ENCODE measurements at regions of chr2 and their contacts with region 1.

Region 1: DNA sequence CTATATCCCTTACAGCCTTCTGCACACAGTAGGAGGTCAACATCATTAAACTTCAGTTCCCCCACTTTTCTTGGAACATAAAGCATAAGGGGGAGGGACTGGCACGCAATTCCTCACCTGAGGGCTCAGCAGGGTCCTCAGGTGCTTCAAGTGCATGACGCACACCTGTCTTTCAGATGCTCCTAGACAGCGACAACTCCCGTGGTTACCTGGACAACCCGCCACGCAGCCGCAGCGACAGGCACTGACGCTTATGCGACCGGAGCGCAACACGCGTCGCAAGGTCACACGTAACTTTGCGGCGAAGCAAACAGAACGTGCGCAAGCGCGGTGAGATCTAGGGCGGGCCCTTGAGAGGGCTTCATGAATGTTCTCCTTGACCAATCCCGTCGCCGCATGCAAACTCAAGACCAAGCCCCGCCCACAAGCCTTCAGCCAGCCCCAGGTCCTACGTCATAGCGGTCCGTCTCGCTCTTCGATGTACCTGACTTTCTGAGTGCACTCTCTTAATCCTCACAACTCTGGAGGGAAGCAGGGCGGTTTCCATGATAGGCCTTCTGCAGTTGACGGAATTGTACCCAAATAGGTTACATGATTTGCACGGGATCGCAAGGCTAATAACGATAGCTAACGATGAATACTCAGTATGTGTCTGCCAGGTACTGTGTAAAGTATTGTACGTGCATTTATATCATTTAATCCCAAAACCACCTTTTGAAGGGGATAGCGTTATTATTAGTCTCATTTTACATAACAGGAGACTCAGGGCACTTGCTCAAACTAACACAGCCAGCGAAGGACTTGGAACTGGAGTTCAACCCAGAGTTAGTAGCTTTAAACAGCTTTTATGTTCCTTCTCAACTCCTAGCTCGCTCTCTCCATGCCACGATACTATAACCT is at the start of gene IFT172:
- DNase-seq: peak; percentile 100
- ATAC-seq: peak; percentile 97
- H3K4me3 ChIP-seq: peak within 1 kb of the TSS; percentile 57 to 79 (median 59)
- H3K4me3 Mint-ChIP-seq: peak within 1 kb of the TSS; percentile 92
- H3K27ac ChIP-seq: peak within 1 kb of the TSS; percentile 60 to 84
- H3K27ac Mint-ChIP-seq: peak within 1 kb of the TSS; percentile 93
- H3K4me1 ChIP-seq: peaks cover 19 to 21% of the 10 kb centered on the region in 2 donors
- H3K4me1 Mint-ChIP-seq: peaks cover 27% of the 10 kb centered on the region
- H3K27me3 ChIP-seq: peaks cover 0 to 20% (median 10%) of the 10 kb centered on the region in 4 experiments
- H3K27me3 Mint-ChIP-seq: peaks cover 17% of the 10 kb centered on the region
- CTCF ChIP-seq: no peak
- total RNA-seq, gene IFT172: 33.3 and 41.0 TPM in 2 replicates

Region 2: DNA sequence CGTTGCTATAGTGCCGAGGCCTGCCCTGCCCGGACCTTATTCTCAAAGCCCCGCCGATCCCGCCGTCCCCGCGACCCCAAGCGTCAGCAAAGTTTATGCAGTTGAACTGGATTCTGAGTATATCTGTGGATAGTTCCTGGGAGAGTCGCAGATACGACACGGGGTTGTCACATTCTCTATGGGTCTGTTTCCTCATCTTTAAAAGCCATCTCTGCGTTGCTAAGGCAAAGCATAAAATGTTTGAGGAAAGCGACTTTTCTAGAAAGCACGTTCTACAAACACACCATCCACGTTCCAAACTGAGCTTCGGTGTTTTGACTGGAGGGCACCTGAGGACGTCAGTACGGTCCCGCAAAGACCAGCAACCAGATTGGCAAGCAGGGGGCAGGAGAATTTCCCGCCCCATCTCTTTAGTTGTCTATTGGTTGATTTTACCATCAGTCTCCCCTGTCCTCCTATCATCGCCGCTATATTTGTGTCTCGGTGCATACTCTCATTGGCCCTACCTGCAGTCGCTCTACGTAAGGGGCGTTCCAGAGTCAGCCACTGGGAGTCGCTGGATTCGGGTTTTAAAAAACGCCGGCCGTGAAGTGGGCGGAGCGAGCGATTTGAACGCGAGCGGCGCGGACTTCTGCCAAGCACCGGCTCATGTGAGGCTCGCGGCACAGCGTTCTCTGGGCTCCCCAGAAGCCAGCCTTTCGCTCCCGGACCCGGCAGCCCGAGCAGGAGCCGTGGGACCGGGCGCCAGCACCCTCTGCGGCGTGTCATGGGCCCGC is 704.1 kb before region 1 on chr2 and contains the start of gene CENPA:
- CTCF ChIA-PET with region 1: no interaction called
- POLR2A ChIA-PET with region 1: no interaction called
- intact Hi-C with region 1: loop called (anchors 2 kb)
- DNase-seq: peak; percentile 98
- ATAC-seq: peak; percentile 99
- H3K4me3 ChIP-seq: peak within 1 kb of the TSS; percentile 51 to 81 (median 71)
- H3K4me3 Mint-ChIP-seq: peak within 1 kb of the TSS; percentile 93
- H3K27ac ChIP-seq: peak within 1 kb of the TSS; percentile 27 to 41
- H3K27ac Mint-ChIP-seq: peak within 1 kb of the TSS; percentile 83
- H3K4me1 ChIP-seq: peaks cover 8 to 14% of the 10 kb centered on the region in 2 donors
- H3K4me1 Mint-ChIP-seq: peaks cover 13% of the 10 kb centered on the region
- H3K27me3 ChIP-seq: no peaks in the 10 kb centered on the region
- H3K27me3 Mint-ChIP-seq: peaks cover 3% of the 10 kb centered on the region
- CTCF ChIP-seq: peak; percentile 7
- total RNA-seq, gene CENPA: not detected in 2 replicates

Region 3: GRCh38 chr2:27409321-27410073 is 80.3 kb before region 1 on chr2 and contains the start of gene PPM1G:
- CTCF ChIA-PET with region 1: no interaction called
- POLR2A ChIA-PET with region 1: no interaction called
- intact Hi-C with region 1: loop called (anchors 1 kb)
- DNase-seq: peak; percentile 96
- ATAC-seq: peak; percentile 97
- H3K4me3 ChIP-seq: peak within 1 kb of the TSS; percentile 28 to 96 (median 95)
- H3K4me3 Mint-ChIP-seq: peak within 1 kb of the TSS; percentile 87
- H3K27ac ChIP-seq: peak within 1 kb of the TSS; percentile 76 to 77
- H3K27ac Mint-ChIP-seq: peak within 1 kb of the TSS; percentile 90
- H3K4me1 ChIP-seq: peaks cover 15 to 20% of the 10 kb centered on the region in 2 donors
- H3K4me1 Mint-ChIP-seq: peaks cover 26% of the 10 kb centered on the region
- H3K27me3 ChIP-seq: no peaks in the 10 kb centered on the region
- H3K27me3 Mint-ChIP-seq: peaks cover 13% of the 10 kb centered on the region
- CTCF ChIP-seq: no peak
- total RNA-seq, gene PPM1G: 45.5 and 48.9 TPM in 2 replicates

Region 4: DNA sequence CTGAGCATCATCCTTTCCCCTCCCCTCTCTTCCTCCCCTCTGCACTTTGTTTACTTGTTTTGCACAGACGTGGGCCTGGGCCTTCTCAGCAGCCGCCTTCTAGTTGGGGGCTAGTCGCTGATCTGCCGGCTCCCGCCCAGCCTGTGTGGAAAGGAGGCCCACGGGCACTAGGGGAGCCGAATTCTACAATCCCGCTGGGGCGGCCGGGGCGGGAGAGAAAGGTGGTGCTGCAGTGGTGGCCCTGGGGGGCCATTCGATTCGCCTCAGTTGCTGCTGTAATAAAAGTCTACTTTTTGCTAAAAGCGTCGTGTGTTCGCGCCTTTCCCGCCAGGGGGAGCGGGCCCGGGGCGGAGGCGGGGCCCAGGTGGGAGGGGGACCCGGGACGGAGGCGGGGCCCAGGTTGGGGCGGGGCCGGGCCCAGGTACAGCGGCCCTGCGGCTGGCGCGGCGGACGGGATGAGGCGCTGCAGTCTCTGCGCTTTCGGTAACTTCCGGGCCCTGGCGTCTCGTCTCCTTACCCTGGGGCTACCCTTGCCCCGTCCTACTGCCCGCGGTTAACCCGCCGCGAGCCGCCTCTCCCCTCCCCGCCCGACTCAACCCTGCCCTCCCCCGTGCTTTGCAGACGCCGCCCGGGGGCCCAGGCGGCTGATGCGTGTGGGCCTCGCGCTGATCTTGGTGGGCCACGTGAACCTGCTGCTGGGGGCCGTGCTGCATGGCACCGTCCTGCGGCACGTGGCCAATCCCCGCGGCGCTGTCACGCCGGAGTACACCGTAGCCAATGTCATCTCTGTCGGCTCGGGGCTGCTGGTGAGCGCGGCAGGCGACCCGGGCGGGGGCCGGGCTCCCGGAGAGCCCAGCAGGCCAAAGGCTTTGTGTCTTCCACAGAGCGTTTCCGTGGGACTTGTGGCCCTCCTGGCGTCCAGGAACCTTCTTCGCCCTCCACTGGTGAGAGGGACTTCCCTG is 47.5 kb before region 1 on chr2 and contains the start of gene KRTCAP3:
- CTCF ChIA-PET with region 1: no interaction called
- POLR2A ChIA-PET with region 1: no interaction called
- intact Hi-C with region 1: loop called (anchors 5 kb)
- DNase-seq: peak; percentile 70
- ATAC-seq: peak; percentile 98
- H3K4me3 ChIP-seq: peak within 1 kb of the TSS in 3 of 5 experiments; percentile 19 to 37 (median 27)
- H3K4me3 Mint-ChIP-seq: peak within 1 kb of the TSS; percentile 72
- H3K27ac ChIP-seq: no peak within 1 kb of the TSS
- H3K27ac Mint-ChIP-seq: peak within 1 kb of the TSS; percentile 72
- H3K4me1 ChIP-seq: peaks cover 3 to 6% of the 10 kb centered on the region in 2 donors
- H3K4me1 Mint-ChIP-seq: peaks cover 12% of the 10 kb centered on the region
- H3K27me3 ChIP-seq: no peaks in the 10 kb centered on the region
- H3K27me3 Mint-ChIP-seq: no peaks in the 10 kb centered on the region
- CTCF ChIP-seq: peak; percentile 58
- total RNA-seq, gene KRTCAP3: 15.0 and 16.5 TPM in 2 replicates

Region 5: GRCh38 chr2:27552941-27553340 is 63.2 kb after region 1 on chr2:
- CTCF ChIA-PET with region 1: no interaction called
- POLR2A ChIA-PET with region 1: no interaction called
- intact Hi-C with region 1: no loop called
- DNase-seq: no peak
- ATAC-seq: no peak
- H3K4me3 ChIP-seq: no peak overlapping the region
- H3K4me3 Mint-ChIP-seq: no peak overlapping the region
- H3K27ac ChIP-seq: no peak overlapping the region
- H3K27ac Mint-ChIP-seq: no peak overlapping the region
- H3K4me1 ChIP-seq: no peaks in the 10 kb centered on the region
- H3K4me1 Mint-ChIP-seq: no peaks in the 10 kb centered on the region
- H3K27me3 ChIP-seq: peaks cover 0 to 3% (median 2%) of the 10 kb centered on the region in 4 experiments
- H3K27me3 Mint-ChIP-seq: peaks cover 18% of the 10 kb centered on the region
- CTCF ChIP-seq: no peak

Region 6: DNA sequence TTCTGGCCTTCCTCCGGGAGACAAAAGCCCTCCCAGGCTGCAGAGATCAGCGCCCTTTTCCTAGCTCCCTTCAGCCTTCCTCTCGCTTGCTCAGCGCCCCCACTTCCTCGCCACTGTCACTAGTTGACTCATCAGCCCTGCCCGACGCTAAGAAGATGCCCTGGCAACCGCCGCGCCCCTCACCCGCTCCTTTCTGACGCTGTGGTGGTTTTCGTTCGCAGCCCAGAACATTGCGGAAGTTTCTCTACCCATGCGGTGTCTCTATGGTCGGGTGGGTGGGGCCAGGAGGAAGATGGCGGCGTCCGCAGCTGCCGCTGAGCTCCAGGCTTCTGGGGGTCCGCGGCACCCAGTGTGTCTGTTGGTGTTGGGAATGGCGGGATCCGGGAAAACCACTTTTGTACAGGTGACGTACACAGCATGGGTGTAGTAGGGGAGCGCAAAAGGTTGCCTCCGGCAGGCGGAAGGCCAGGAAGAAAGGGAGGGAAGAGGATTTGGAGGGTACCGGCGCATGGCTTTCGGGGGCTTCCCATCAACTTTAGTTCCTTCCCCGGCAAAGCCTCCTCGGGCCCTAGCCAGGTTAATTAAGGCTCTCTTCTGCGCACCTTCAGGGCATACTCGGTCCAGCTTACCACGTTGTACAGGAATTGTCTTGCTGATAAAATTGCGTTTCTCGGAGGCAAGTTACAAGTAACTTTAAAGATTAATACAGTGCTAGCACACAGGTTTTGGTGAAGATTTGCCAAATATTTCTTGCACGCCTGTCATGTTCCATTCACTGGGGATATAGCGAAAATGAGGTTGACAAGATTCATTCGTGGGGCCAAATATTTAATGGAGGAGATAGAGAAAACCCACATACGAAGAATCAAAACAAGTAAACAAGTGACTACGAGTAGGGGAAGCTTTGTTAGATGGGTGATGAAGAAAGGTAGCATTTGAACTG is 139.3 kb after region 1 on chr2 and contains the starts of genes CCDC121 and GPN1:
- CTCF ChIA-PET with region 1: no interaction called
- POLR2A ChIA-PET with region 1: no interaction called
- intact Hi-C with region 1: loop called (anchors 1 kb)
- DNase-seq: peak; percentile 94
- ATAC-seq: peak; percentile 100
- H3K4me3 ChIP-seq: peak within 1 kb of the TSS; percentile 83 to 98 (median 91)
- H3K4me3 Mint-ChIP-seq: no peak within 1 kb of the TSS
- H3K27ac ChIP-seq: peak within 1 kb of the TSS; percentile 70 to 83
- H3K27ac Mint-ChIP-seq: peak within 1 kb of the TSS; percentile 51
- H3K4me1 ChIP-seq: peaks cover 10 to 17% of the 10 kb centered on the region in 2 donors
- H3K4me1 Mint-ChIP-seq: peaks cover 24% of the 10 kb centered on the region
- H3K27me3 ChIP-seq: no peaks in the 10 kb centered on the region
- H3K27me3 Mint-ChIP-seq: no peaks in the 10 kb centered on the region
- CTCF ChIP-seq: no peak
- total RNA-seq, gene CCDC121: 1.3 and 2.2 TPM in 2 replicates
- total RNA-seq, gene GPN1: 26.0 and 27.8 TPM in 2 replicates

Measured in B cell (primary cell).